ENCODE measurements at regions of chr9 and their contacts with region 1.

Region 1: DNA sequence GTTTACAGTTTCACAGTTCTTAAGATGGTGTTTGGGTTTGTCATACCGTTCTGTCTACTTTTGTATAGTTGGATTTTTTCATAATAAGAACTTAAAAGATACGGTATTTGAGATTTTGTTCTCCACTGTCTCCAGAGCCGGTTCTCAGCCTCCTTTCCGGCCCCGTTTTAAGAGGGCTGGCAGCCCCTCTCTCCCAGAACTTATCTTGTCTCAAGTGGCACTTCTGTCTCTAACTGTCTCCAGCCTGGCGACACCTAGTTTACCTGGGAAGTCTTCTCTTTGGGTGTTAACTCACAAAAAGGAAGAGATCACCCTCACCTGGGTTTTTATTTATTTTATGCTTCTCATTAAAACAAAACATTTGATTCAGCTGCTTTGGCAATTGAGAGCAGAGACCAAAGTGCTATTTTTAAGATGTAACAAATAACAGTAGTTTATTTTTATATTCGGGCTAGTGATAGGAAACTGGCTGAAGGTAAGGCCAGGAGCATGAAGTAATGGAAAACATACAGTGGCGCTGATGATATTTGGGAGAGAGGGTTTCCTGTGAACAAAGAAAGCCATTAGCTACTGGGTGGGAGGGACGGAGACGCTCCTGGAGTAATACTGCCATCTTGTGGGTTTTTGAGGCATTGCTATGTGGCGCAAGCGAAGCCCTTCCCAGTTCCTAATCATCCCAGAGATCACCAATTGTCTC is 48.3 kb downstream of the ACER2 start:
- DNase-seq: no peak
- H3K4me3 ChIP-seq: peak overlapping the region; percentile 16; the same call in 1 of the 2 replicates
- CTCF ChIP-seq: peak; percentile 85

Region 2: GRCh38 chr9:19048966-19049916 is 407.9 kb before region 1 on chr9 and contains the start of gene RRAGA:
- CTCF ChIA-PET with region 1: interaction called, 47 read pairs
- POLR2A ChIA-PET with region 1: no interaction called
- DNase-seq: peak; percentile 85
- H3K4me3 ChIP-seq: peak within 1 kb of the TSS; percentile 69
- CTCF ChIP-seq: peak; percentile 84

Region 3: DNA sequence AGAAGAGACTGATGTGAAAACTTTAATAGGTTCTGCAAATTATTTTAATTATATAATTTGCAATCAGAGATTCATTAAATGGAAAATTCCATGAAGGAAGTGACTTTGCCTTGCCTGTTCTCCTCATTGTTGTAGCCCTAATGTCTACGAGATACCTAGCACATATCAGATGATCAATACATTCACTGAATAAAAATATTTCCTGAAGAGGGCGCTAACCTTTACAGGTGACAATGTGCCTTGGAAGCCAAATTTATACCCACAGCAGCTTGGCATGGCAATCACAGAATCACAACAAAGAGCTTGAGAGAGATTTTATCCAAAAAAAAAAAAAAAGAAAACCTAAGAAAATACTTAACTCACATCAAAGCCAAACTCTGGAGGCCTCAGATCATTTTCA is 371.8 kb before region 1 on chr9:
- CTCF ChIA-PET with region 1: interaction called, 13 read pairs
- POLR2A ChIA-PET with region 1: no interaction called
- DNase-seq: no peak
- H3K4me3 ChIP-seq: no peak overlapping the region
- CTCF ChIP-seq: no peak

Region 4: DNA sequence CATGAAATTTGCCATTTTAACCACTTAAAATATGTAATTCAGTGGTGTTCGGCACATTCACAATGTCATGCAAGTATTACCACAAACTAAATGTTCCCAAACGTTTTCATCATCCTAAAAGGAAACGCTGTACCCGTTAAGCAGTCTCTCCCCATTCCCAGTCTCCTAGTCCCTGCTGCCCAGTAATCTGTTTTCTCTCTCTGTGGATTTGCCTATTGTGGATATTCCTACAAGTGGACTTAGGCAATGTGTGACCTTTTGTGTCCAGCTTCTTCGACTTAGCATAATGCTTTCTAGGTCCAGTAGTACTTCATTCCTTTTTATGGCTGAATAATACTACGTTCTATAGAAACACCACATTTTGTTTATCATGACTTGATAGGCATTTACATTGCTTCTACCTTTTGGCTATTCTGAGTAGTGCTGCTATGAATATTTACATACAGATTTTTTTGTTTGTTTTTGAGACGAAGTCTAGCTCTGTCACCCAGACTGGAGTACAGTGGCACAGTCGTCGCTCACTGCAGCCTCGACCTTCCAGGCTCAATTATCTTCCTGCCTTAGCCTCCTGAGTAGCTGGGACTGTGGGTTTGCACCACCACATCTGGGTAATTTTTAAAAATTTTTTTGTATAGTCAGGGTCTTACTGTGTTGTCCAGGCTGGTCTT is 213.6 kb before region 1 on chr9:
- CTCF ChIA-PET with region 1: no interaction called
- POLR2A ChIA-PET with region 1: no interaction called
- DNase-seq: no peak
- H3K4me3 ChIP-seq: no peak overlapping the region
- CTCF ChIP-seq: no peak

Region 5: DNA sequence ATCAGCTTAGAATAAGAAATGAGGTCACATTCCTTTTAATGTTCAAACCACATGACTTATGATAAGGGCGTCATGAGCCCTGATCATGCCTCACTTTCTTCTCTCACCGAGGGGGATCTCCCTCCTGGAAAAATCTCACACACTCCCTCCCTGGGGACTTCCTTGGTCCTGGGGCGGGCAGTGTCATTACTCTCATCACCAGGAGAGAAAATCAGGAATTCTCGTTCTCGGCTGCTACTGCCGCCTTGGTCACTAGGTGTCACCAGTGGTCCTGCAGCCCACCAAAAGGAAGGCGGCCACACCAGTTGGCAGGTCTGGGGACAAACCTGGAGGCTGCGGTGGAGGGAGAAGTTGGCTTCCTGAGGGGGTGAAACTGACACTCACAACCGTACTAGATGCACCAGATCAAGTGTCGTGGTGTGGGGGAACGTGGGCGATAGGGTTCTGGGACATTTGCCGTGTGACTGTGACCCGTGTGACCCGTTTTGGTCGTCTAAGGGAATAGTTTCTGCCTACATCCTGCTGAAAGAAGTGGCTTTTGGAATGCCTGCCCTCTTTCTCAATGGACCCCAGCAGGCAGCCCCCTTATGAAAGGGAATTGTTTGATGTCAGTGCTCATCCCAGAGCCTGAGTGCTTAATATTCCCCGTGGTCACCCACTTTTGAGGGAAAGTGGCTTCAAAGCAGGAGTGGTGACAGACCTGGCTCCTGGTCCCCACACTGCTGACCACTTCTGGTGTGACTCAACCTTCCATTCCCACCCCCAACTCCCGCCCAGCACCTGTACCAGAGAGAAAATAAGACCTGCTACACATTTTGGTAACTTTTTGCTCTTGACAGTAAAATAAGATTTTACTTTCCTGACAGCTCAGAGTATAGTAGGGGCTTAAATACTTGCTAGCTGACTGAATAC is 14.8 kb after region 1 on chr9:
- CTCF ChIA-PET with region 1: interaction called, 14 read pairs
- POLR2A ChIA-PET with region 1: no interaction called
- DNase-seq: no peak
- H3K4me3 ChIP-seq: no peak overlapping the region
- CTCF ChIP-seq: peak; percentile 70

Region 6: GRCh38 chr9:19493174-19493811 is 36.1 kb after region 1 on chr9:
- CTCF ChIA-PET with region 1: no interaction called
- POLR2A ChIA-PET with region 1: no interaction called
- DNase-seq: no peak
- H3K4me3 ChIP-seq: peak overlapping the region; percentile 46
- CTCF ChIP-seq: peak; percentile 70

Region 7: DNA sequence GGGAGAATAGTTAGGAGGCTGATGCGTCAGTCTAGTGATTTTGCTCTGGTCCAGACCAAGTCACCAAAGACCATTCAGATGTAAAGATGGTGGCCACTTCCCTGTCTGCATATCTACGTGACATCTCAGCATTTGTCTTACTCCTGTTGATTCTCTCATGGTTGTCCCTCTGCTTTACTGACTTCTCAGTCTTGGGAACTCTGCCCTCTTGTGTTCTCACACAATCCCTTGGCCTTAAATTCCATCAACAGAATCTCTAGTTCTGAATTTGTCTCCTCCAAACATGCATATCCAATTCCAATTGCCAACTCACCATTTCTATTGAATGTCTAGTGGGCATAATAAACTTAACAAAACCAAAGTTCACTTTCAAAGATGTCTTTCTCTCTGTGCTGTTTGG is 183.9 kb after region 1 on chr9:
- CTCF ChIA-PET with region 1: no interaction called
- POLR2A ChIA-PET with region 1: no interaction called
- DNase-seq: no peak
- H3K4me3 ChIP-seq: no peak overlapping the region
- CTCF ChIP-seq: no peak